Calu3 (cell line): ENCODE measurements at regions of chr6 and their contacts with region 1.

Region 1: GRCh38 chr6:33717934-33718455 is 6.5 kb upstream of the UQCC2 start:
- DNase-seq: no peak
- H3K4me3 Mint-ChIP-seq: no peak overlapping the region
- H3K27ac Mint-ChIP-seq: no peak overlapping the region
- H3K4me1 Mint-ChIP-seq: peaks cover 47% of the 10 kb centered on the region
- H3K27me3 Mint-ChIP-seq: peaks cover 11% of the 10 kb centered on the region
- CTCF ChIP-seq: no peak

Region 2: DNA sequence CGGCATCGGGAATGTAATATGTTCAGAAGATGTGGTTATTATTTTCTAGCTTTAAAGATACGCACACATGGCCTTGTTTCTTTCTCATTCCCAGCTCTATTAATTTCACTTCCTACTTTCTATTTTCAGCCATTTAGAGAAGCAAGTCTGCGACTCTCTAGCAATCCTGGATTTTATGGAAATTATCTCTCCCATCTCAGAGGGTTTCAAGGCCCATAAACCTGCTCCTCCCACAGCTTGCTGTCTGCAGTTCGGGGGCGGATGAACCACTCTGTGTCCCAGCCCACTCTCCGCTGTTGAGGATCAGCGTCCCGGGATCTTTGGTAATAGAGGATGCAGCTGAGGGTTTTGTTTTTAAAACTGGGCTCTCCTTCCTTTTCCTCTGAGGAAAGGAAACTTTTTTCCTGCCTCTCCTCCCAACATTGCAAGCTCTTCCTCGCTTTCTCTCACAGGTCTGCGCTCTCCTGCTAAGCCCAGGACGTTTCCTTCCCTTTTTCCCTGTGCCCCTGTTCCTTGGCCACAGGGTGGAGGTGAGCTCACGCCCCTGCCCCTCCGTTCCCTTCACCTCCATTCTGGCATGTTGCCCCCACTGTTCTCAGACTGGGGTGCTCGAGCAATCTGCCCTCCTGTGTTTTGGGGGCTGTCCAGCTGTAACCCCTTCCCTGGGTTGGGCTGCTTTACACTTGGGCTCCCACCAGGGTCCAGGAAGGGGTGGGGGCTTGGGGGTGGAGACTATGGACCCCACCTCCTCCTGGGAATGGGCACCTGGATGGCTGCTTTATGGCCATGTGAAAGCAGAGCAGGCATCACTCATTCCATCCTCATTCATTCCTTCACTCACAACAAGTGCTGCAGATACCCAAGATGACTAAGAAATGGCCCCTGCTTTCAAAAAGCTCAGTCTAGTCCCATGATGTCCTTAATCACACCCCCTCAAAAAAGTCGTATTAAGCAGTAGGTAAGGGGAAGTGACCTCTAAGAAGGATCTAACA is 208.8 kb before region 1 on chr6:
- CTCF ChIA-PET with region 1: no interaction called
- intact Hi-C with region 1: no loop called
- DNase-seq: no peak
- H3K4me3 Mint-ChIP-seq: no peak overlapping the region
- H3K27ac Mint-ChIP-seq: no peak overlapping the region
- H3K4me1 Mint-ChIP-seq: peaks cover 12% of the 10 kb centered on the region
- H3K27me3 Mint-ChIP-seq: peaks cover 28% of the 10 kb centered on the region
- CTCF ChIP-seq: no peak

Region 3: DNA sequence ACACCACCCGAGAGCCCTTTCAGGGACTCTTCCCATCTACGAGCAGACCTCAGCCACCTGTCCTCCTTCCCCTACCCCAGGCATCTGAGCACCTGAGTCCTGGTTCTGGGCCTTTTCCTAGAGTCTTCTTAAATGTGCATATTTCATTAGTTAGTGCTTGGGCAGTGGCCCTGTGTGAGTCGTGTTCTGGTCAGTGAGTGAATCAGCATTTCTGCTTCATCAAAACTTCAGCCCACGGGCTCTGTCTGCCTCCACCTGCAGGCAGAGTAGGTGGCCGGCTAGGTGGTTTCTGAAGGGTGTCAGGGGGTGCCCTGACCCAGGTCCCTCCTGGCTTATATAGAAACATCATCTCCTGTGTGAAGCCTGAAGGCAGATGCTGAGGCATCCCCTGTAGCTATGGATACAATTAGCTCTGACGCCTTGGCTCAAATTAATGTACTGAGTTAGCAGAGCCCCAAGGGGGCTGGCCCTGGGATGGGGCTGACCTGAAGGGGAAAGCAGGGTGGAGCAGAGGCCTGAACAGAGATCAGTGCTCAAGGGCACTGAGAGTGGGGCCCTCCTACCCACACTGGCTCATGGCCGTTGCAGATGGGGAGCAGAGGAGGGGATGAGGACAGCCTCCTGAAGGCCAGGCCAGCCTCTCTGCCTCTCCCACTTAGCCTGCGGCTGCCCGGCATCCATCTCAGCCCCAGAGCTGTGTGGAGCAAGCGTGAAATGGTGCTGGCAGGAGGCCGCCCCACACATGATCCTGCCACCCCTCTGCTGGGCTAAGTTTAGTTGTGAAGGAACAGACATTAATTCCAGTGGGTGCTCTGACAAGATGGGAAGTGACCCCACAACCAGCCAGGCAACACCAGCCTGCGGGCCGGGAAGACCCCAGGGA is 15.1 kb after region 1 on chr6:
- CTCF ChIA-PET with region 1: interaction called, 16 read pairs
- intact Hi-C with region 1: no loop called
- DNase-seq: no peak
- H3K4me3 Mint-ChIP-seq: no peak overlapping the region
- H3K27ac Mint-ChIP-seq: peak overlapping the region; percentile 50
- H3K4me1 Mint-ChIP-seq: peaks cover 37% of the 10 kb centered on the region
- H3K27me3 Mint-ChIP-seq: no peaks in the 10 kb centered on the region
- CTCF ChIP-seq: no peak

Region 4: GRCh38 chr6:33744001-33744848 is 26.2 kb after region 1 on chr6:
- CTCF ChIA-PET with region 1: interaction called, 17 read pairs
- intact Hi-C with region 1: loop called (anchors 1 kb)
- DNase-seq: peak; percentile 89
- H3K4me3 Mint-ChIP-seq: peak overlapping the region; percentile 35
- H3K27ac Mint-ChIP-seq: peak overlapping the region; percentile 15
- H3K4me1 Mint-ChIP-seq: peaks cover 39% of the 10 kb centered on the region
- H3K27me3 Mint-ChIP-seq: peaks cover 24% of the 10 kb centered on the region
- CTCF ChIP-seq: peak; percentile 99

Region 5: DNA sequence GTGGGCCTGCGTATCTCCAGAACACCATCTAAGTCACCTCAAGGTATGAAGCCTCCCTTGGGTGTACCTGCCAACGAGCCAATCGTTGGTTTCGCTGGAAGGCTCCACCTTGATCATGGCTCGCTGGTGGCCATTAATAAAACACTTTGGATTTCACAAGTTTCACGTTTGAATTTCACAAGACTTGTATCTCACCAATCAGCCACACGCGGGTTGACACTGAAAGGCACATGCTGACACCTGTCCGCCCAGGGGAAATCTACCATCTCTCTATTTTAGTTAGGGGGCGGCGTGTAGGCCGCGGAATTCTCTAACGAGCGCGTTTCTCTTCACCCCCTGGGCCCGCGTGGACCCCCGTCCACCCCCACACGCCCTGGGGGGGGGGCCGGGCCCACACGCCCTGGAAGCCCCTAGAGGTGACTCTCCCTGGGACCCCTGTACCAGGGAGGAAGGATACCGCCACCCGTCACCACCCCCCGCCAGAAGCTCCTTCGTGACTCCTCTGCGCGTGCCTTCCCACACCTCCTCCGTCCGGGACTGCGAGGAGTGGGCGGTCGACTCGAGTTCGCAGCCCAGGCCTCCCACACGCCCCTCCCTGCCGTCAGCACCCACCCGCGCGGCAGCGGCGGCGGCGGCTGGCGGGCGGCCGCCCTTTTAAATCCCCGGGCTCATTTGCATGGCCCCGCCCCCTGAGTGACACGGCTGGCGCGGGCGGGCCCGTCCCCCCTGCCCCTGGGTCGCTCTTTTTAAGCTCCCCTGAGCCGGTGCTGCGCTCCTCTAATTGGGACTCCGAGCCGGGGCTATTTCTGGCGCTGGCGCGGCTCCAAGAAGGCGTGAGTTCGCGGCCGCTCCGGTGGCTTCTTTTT is 518.4 kb after region 1 on chr6 and contains the start of gene HMGA1:
- CTCF ChIA-PET with region 1: no interaction called
- intact Hi-C with region 1: loop called (anchors 5 kb)
- DNase-seq: peak; percentile 98
- H3K4me3 Mint-ChIP-seq: peak within 1 kb of the TSS; percentile 81
- H3K27ac Mint-ChIP-seq: peak within 1 kb of the TSS; percentile 97
- H3K4me1 Mint-ChIP-seq: peaks cover 53% of the 10 kb centered on the region
- H3K27me3 Mint-ChIP-seq: no peaks in the 10 kb centered on the region
- CTCF ChIP-seq: no peak
- total RNA-seq, gene HMGA1: 1,138 and 1,378 TPM in 2 replicates